ENCODE measurements at regions of chr17 and their contacts with region 1.

Region 1: GRCh38 chr17:73371285-73371684 is 59.5 kb upstream of the CDC42EP4 start:
- DNase-seq: no peak
- ATAC-seq: no peak
- H3K4me3 Mint-ChIP-seq: no peak overlapping the region
- H3K27ac Mint-ChIP-seq: no peak overlapping the region; the same call in 1 of the 2 replicates
- H3K4me1 Mint-ChIP-seq: peaks cover 8% of the 10 kb centered on the region
- H3K27me3 Mint-ChIP-seq: no peaks in the 10 kb centered on the region
- CTCF ChIP-seq: no peak

Region 2: DNA sequence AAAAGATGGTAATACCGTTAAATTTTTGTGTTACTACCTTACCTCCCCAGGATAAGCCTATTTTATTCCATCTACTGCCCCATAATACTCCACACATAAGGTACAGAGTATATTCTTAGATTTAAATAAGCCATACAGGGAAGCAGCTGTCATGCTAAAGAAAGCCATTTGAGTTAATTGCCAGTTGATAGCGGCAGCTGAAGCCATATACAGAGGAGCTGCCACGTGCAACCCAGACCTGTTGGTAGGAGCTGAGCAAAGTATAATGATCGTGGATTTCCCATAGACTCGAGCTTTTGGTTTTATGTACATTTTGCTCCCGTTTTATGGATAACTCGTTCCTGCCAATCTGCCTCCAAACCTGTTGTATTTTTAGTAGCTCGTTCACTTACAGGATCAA is 121.6 kb before region 1 on chr17:
- CTCF ChIA-PET with region 1: interaction called, 143 read pairs
- POLR2A ChIA-PET with region 1: no interaction called
- DNase-seq: no peak
- ATAC-seq: no peak
- H3K4me3 Mint-ChIP-seq: no peak overlapping the region
- H3K27ac Mint-ChIP-seq: no peak overlapping the region
- H3K4me1 Mint-ChIP-seq: peaks cover 2% of the 10 kb centered on the region; the same call in 1 of the 2 replicates
- H3K27me3 Mint-ChIP-seq: no peaks in the 10 kb centered on the region
- CTCF ChIP-seq: no peak

Region 3: DNA sequence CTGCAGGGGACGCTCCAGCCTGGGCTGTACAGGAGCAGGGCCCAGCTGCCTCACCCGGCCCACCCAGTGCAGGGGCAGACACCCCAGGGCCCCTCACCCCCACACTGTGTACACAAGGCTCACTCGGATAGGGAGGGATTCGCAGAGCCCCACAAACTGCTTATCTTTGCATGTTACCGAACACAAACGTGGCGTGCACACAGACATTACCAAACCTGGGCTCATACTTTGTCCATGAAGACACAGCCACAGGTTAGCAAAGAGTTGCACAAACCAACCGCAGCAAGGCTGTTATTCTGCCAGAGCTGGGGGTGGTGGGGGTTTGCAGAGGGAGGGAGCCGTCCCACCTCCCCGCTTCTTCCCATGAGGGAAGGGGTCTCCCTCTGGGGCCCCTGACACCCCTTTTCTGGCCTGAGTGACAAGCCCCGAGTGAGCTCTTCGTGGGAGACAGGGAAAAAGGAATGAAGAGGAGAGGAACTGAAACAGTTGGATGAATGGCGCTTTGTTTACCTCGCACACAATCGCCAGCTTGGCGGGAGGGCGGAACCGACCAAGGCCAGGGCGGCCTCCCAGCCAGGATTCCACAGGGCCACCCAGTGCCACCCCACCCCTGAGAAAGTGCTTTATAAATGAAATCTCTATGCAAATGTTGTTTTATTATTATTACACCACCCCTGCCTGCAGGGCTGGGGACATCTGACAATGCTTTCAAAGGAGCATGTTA is 109.2 kb before region 1 on chr17:
- CTCF ChIA-PET with region 1: interaction called, 25 read pairs
- POLR2A ChIA-PET with region 1: interaction called, 4 read pairs
- DNase-seq: no peak
- ATAC-seq: peak; percentile 66
- H3K4me3 Mint-ChIP-seq: peak overlapping the region; percentile 24; the same call in 1 of the 2 replicates
- H3K27ac Mint-ChIP-seq: no peak overlapping the region
- H3K4me1 Mint-ChIP-seq: peaks cover 25% of the 10 kb centered on the region
- H3K27me3 Mint-ChIP-seq: peaks cover 3% of the 10 kb centered on the region
- CTCF ChIP-seq: no peak

Region 4: GRCh38 chr17:73304971-73305812 is 66.1 kb before region 1 on chr17:
- CTCF ChIA-PET with region 1: interaction called, 88 read pairs
- POLR2A ChIA-PET with region 1: no interaction called
- DNase-seq: peak; percentile 52
- ATAC-seq: peak; percentile 76
- H3K4me3 Mint-ChIP-seq: no peak overlapping the region
- H3K27ac Mint-ChIP-seq: peak overlapping the region; percentile 75; the same call in 1 of the 2 replicates
- H3K4me1 Mint-ChIP-seq: peaks cover 30% of the 10 kb centered on the region
- H3K27me3 Mint-ChIP-seq: no peaks in the 10 kb centered on the region
- CTCF ChIP-seq: no peak

Region 5: DNA sequence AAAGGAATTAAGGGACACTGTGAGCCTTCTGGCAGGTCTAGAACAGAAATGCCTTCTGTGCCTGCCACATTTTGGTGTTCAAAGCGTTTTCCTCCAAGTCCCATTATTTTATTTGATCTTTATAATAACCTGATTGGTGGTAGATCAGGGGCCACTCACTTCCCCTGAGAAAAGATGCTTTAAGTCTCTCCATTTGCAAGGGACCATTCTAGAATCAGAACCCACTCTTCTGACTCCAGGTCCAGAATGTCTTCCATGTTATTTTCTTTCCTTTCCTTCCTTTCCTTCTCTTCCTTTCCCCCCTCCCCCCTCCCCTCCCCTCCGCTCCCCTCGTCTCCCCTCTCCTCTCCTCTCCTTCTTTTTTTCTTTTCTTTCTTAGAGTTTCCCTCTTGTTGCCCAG is 40.2 kb before region 1 on chr17:
- CTCF ChIA-PET with region 1: interaction called, 11 read pairs
- POLR2A ChIA-PET with region 1: no interaction called
- DNase-seq: no peak
- ATAC-seq: no peak
- H3K4me3 Mint-ChIP-seq: no peak overlapping the region
- H3K27ac Mint-ChIP-seq: no peak overlapping the region
- H3K4me1 Mint-ChIP-seq: peaks cover 4% of the 10 kb centered on the region; the same call in 1 of the 2 replicates
- H3K27me3 Mint-ChIP-seq: peaks cover 2% of the 10 kb centered on the region; the same call in 1 of the 2 replicates
- CTCF ChIP-seq: no peak

Region 6: DNA sequence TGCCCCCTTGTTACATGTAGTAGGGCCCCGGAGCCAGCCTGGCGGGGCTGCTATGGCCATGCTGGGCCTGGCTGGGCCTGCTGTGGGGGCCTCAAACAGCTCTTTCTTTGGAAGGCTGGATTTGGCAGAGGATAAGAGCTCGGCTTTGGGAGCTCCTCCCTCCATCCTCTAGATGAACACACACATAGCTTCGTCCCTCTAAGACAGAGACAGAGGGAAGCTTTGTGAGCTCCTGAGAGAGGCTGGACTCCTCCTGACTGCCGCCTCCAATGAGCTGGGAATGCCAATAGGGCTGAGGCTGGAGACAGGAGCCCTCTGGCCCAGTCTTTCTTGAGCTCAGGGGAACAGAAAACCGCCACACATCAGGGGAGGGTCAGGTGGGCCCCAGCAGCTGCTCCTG is 22.1 kb before region 1 on chr17:
- CTCF ChIA-PET with region 1: interaction called, 11 read pairs
- POLR2A ChIA-PET with region 1: interaction called, 3 read pairs
- DNase-seq: no peak
- ATAC-seq: peak; percentile 10; the same call in 1 of the 2 replicates
- H3K4me3 Mint-ChIP-seq: no peak overlapping the region
- H3K27ac Mint-ChIP-seq: no peak overlapping the region
- H3K4me1 Mint-ChIP-seq: peaks cover 33% of the 10 kb centered on the region
- H3K27me3 Mint-ChIP-seq: no peaks in the 10 kb centered on the region
- CTCF ChIP-seq: no peak

Region 7: GRCh38 chr17:73387746-73388577 is 16.7 kb after region 1 on chr17:
- CTCF ChIA-PET with region 1: interaction called, 12 read pairs
- POLR2A ChIA-PET with region 1: no interaction called
- DNase-seq: no peak
- ATAC-seq: peak; percentile 40; the same call in 1 of the 2 replicates
- H3K4me3 Mint-ChIP-seq: no peak overlapping the region
- H3K27ac Mint-ChIP-seq: no peak overlapping the region
- H3K4me1 Mint-ChIP-seq: peaks cover 2% of the 10 kb centered on the region
- H3K27me3 Mint-ChIP-seq: no peaks in the 10 kb centered on the region
- CTCF ChIP-seq: no peak

Measured in WTC11 (cell line).